Activated T-helper 1 cell treated with anti-CD3 and anti-CD28 coated beads, Interleukin-12 subunit alpha, Interleukin-12 subunit beta, Interleukin-2, Interleukin-4 antibody, amounts not matched to agents 30 ng/mL and 10 ng/mL and 1 ng/mL, durations not matched to agents 14 hours and 24 hours and 36 hours (primary cell): ENCODE measurements at regions of chr7 and their contacts with region 1.

Region 1: GRCh38 chr7:140902303-140902953 is 22.3 kb downstream of the BRAF start:
- DNase-seq: no peak
- H3K4me3 Mint-ChIP-seq: peak overlapping the region; percentile 9
- H3K27ac Mint-ChIP-seq: peak overlapping the region; percentile 78
- H3K4me1 Mint-ChIP-seq: peaks cover 40% of the 10 kb centered on the region
- H3K27me3 Mint-ChIP-seq: no peaks in the 10 kb centered on the region

Region 2: GRCh38 chr7:139745678-139746143 is 1156.7 kb before region 1 on chr7:
- intact Hi-C with region 1: no loop called
- DNase-seq: no peak
- H3K4me3 Mint-ChIP-seq: no peak overlapping the region
- H3K27ac Mint-ChIP-seq: no peak overlapping the region
- H3K4me1 Mint-ChIP-seq: peaks cover 30% of the 10 kb centered on the region
- H3K27me3 Mint-ChIP-seq: no peaks in the 10 kb centered on the region

Region 3: GRCh38 chr7:140857048-140857447 is 45.4 kb before region 1 on chr7:
- intact Hi-C with region 1: no loop called
- DNase-seq: no peak
- H3K4me3 Mint-ChIP-seq: no peak overlapping the region
- H3K27ac Mint-ChIP-seq: no peak overlapping the region
- H3K4me1 Mint-ChIP-seq: no peaks in the 10 kb centered on the region
- H3K27me3 Mint-ChIP-seq: no peaks in the 10 kb centered on the region

Region 4: GRCh38 chr7:140876519-140877248 is 25.7 kb before region 1 on chr7:
- intact Hi-C with region 1: loop called (anchors 1 kb)
- DNase-seq: no peak
- H3K4me3 Mint-ChIP-seq: no peak overlapping the region
- H3K27ac Mint-ChIP-seq: no peak overlapping the region
- H3K4me1 Mint-ChIP-seq: peaks cover 29% of the 10 kb centered on the region
- H3K27me3 Mint-ChIP-seq: peaks cover 3% of the 10 kb centered on the region

Region 5: DNA sequence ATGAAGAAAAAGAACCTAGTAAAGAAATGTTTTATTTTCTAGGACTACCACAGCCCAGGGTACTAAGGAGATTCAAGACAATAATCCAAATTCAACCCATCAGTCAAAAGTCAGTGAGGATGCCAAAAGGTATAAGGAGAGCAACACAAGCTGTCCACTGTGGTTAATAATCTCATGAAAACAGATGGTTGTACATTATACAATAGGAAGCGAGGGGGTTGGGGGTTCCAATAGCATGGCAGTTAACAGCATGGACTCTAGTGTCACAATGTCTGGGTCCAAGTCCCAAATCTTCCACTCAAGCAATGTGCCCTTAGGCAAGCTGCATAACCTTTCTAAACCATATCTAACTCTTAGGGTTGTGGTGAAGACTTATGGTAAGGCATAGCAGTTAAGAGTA is 12.8 kb before region 1 on chr7:
- intact Hi-C with region 1: loop called (anchors 2 kb)
- DNase-seq: no peak
- H3K4me3 Mint-ChIP-seq: no peak overlapping the region
- H3K27ac Mint-ChIP-seq: no peak overlapping the region
- H3K4me1 Mint-ChIP-seq: peaks cover 9% of the 10 kb centered on the region
- H3K27me3 Mint-ChIP-seq: no peaks in the 10 kb centered on the region

Region 6: GRCh38 chr7:140961117-140961516 is 58.7 kb after region 1 on chr7:
- intact Hi-C with region 1: no loop called
- DNase-seq: no peak
- H3K4me3 Mint-ChIP-seq: no peak overlapping the region
- H3K27ac Mint-ChIP-seq: no peak overlapping the region
- H3K4me1 Mint-ChIP-seq: no peaks in the 10 kb centered on the region
- H3K27me3 Mint-ChIP-seq: peaks cover 3% of the 10 kb centered on the region